ENCODE measurements at regions of chr13 and their contacts with region 1.

Region 1: GRCh38 chr13:36992340-36992739 is 6.8 kb downstream of the ALG5 start:
- DNase-seq: no peak
- ATAC-seq: no peak
- H3K4me3 ChIP-seq: no peak overlapping the region
- H3K27ac ChIP-seq: no peak overlapping the region
- H3K4me1 ChIP-seq: no peaks in the 10 kb centered on the region
- H3K27me3 ChIP-seq: no peaks in the 10 kb centered on the region
- CTCF ChIP-seq: no peak
- EP300 ChIP-seq: no peak
- POLR2A ChIP-seq: no peak
- RAD21 ChIP-seq: no peak

Region 2: GRCh38 chr13:36981156-36981743 is 11.1 kb before region 1 on chr13:
- CTCF ChIA-PET with region 1: interaction called, 29 read pairs
- POLR2A ChIA-PET with region 1: interaction called, 4 read pairs
- RAD21 ChIA-PET with region 1: interaction called, 3 read pairs
- SMC1A ChIA-PET with region 1: interaction called, 7 read pairs
- in situ Hi-C with region 1: no loop called
- intact Hi-C with region 1: no loop called
- DNase-seq: no peak
- ATAC-seq: peak; percentile 74
- H3K4me3 ChIP-seq: no peak overlapping the region
- H3K27ac ChIP-seq: no peak overlapping the region
- H3K4me1 ChIP-seq: no peaks in the 10 kb centered on the region
- H3K27me3 ChIP-seq: no peaks in the 10 kb centered on the region
- CTCF ChIP-seq: peak; percentile 25 to 59 (median 47); a peak in 5 of 6 replicates
- EP300 ChIP-seq: no peak
- POLR2A ChIP-seq: no peak
- RAD21 ChIP-seq: peak; percentile 61

Measured in GM12878 (cell line).